Vagina (tissue), 2 donors: ENCODE measurements at regions of chr1 and their contacts with region 1.

Region 1: GRCh38 chr1:222263791-222264190 is 284.1 kb downstream of the HHIPL2 start:
- DNase-seq: no peak
- H3K4me3 ChIP-seq: no peak overlapping the region
- H3K27ac ChIP-seq: no peak overlapping the region
- H3K4me1 ChIP-seq: peaks cover 6% of the 10 kb centered on the region
- H3K27me3 ChIP-seq: no peaks in the 10 kb centered on the region
- CTCF ChIP-seq: no peak
- POLR2A ChIP-seq: no peak

Region 2: GRCh38 chr1:222224636-222225315 is 39.0 kb before region 1 on chr1:
- intact Hi-C with region 1: loop called (anchors 1 kb)
- DNase-seq: no peak
- H3K4me3 ChIP-seq: no peak overlapping the region
- H3K27ac ChIP-seq: no peak overlapping the region
- H3K4me1 ChIP-seq: peaks cover 8% of the 10 kb centered on the region
- H3K27me3 ChIP-seq: no peaks in the 10 kb centered on the region
- CTCF ChIP-seq: no peak
- POLR2A ChIP-seq: no peak

Region 3: GRCh38 chr1:223504741-223505140 is 1241.0 kb after region 1 on chr1:
- intact Hi-C with region 1: no loop called
- DNase-seq: no peak
- H3K4me3 ChIP-seq: no peak overlapping the region
- H3K27ac ChIP-seq: no peak overlapping the region
- H3K4me1 ChIP-seq: no peaks in the 10 kb centered on the region
- H3K27me3 ChIP-seq: no peaks in the 10 kb centered on the region
- CTCF ChIP-seq: no peak
- POLR2A ChIP-seq: no peak